Transverse colon (tissue), 4 donors: ENCODE measurements at regions of chr16 and their contacts with region 1.

Region 1: GRCh38 chr16:10181196-10182162 is 749 bp downstream of the GRIN2A start:
- DNase-seq: peak; percentile 60
- H3K4me3 ChIP-seq: peak overlapping the region in 2 of 4 donors; percentile 15 to 36
- H3K27ac ChIP-seq: no peak overlapping the region
- H3K4me1 ChIP-seq: peaks cover 5 to 23% (median 17%) of the 10 kb centered on the region in 4 donors
- H3K27me3 ChIP-seq: peaks cover 62% of the 10 kb centered on the region
- CTCF ChIP-seq: peak; percentile 74 to 88 (median 86)
- EP300 ChIP-seq: no peak
- POLR2A ChIP-seq: no peak

Region 2: DNA sequence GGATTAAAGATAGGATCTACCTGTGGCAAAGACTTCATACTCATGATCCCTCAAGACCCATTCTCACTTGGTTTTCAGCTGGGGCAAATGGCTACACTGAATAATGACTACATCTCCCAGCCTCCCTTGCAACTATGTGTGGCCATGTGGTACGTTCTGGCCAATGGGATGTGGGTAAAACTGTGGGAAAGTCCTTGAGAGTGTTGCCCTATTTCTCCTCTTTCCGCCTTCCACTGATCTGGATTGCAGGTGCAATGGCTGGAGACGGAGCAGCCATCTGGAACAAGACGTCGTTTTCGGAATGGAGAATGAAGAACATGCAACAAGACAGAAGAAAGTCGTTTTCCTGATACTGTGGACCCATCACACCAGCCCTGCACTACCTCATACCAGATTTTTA is 1041.5 kb before region 1 on chr16:
- in situ Hi-C with region 1: loop called in 1 of 4 experiments (anchors 10 kb)
- intact Hi-C with region 1: no loop called
- DNase-seq: no peak
- H3K4me3 ChIP-seq: no peak overlapping the region
- H3K27ac ChIP-seq: no peak overlapping the region
- H3K4me1 ChIP-seq: peaks cover 0 to 9% (median 6%) of the 10 kb centered on the region in 4 donors
- H3K27me3 ChIP-seq: no peaks in the 10 kb centered on the region
- CTCF ChIP-seq: no peak
- EP300 ChIP-seq: no peak
- POLR2A ChIP-seq: no peak

Region 3: DNA sequence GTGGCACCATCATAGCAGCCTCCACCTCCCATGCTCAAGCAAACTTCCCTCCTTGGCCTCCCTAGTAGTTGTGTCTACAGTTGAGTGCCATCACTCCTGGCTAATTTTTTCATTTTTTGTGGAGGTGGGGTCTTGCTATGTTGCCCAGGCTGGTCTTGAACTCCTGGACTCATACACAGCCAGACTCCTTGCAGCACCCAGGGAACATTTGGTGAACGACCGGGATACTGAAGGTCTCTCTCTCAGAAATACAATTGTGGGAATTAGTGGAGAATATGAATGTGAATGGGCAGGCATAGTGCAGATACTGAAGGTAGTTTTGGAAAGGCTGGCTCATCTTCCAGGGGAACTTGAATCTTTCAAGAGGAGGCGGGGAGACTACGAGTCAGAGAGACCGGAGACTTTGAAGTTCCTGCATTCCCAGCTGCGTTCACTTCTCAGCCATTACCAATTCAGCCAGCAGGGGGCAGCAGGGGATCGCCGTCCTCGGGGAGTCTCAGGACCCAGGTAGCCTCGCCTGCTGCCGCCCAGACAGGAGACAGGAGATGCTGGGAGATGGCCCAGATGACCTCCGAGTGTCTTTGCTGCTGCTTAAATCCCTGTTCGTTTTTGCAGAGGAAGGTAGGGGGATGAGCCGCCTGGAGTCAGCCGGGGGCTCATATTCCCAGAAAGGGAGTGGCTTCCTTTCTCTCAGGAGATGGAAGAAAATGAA is 1021.5 kb before region 1 on chr16:
- in situ Hi-C with region 1: loop called in 1 of 4 experiments (anchors 10 kb)
- intact Hi-C with region 1: no loop called
- DNase-seq: peak; percentile 63
- H3K4me3 ChIP-seq: no peak overlapping the region
- H3K27ac ChIP-seq: no peak overlapping the region
- H3K4me1 ChIP-seq: no peaks in the 10 kb centered on the region
- H3K27me3 ChIP-seq: peaks cover 4% of the 10 kb centered on the region
- CTCF ChIP-seq: peak; percentile 44 to 81 (median 78)
- EP300 ChIP-seq: no peak
- POLR2A ChIP-seq: no peak

Region 4: DNA sequence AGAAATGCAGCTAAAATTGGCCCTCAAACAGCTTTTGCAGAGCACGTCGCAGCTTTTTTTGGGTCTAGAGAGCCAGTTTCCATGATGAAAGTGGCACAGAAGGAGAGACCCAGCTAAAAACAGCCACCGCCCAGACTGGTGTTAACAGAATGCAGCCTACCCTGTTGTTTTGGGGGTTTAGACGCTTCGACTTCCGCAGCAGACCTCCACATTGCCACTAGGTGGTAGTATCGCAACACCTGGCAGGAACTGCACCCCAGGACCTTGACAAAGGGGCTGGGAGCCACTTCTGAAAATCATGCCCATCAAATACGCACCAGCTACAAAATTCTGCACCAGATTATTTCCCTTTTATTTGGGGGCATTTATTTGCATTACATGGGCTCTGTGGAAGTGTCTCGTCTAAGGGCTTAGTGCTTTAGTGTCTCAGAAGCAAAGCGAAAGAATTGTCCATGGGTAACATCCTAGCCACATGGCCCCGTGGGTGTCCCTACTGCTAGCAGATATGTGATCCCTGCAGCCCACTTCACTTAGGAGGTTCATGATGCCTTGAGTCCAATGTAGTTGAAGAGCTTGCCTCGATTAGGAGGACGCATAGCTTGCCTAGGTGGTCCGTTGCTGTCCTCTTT is 922.9 kb before region 1 on chr16:
- in situ Hi-C with region 1: loop called in 1 of 4 experiments (anchors 25 kb)
- intact Hi-C with region 1: no loop called
- DNase-seq: peak; percentile 18
- H3K4me3 ChIP-seq: no peak overlapping the region
- H3K27ac ChIP-seq: no peak overlapping the region
- H3K4me1 ChIP-seq: peaks cover 0 to 8% (median 0%) of the 10 kb centered on the region in 4 donors
- H3K27me3 ChIP-seq: no peaks in the 10 kb centered on the region
- CTCF ChIP-seq: peak; percentile 56 to 76 (median 73)
- EP300 ChIP-seq: no peak
- POLR2A ChIP-seq: no peak

Region 5: GRCh38 chr16:9297437-9298113 is 883.9 kb before region 1 on chr16:
- in situ Hi-C with region 1: no loop called
- intact Hi-C with region 1: loop called (anchors 5 kb)
- DNase-seq: no peak
- H3K4me3 ChIP-seq: no peak overlapping the region
- H3K27ac ChIP-seq: no peak overlapping the region
- H3K4me1 ChIP-seq: peaks cover 0 to 18% (median 6%) of the 10 kb centered on the region in 4 donors
- H3K27me3 ChIP-seq: no peaks in the 10 kb centered on the region
- CTCF ChIP-seq: peak; percentile 42 to 65 (median 49)
- EP300 ChIP-seq: no peak
- POLR2A ChIP-seq: no peak

Region 6: DNA sequence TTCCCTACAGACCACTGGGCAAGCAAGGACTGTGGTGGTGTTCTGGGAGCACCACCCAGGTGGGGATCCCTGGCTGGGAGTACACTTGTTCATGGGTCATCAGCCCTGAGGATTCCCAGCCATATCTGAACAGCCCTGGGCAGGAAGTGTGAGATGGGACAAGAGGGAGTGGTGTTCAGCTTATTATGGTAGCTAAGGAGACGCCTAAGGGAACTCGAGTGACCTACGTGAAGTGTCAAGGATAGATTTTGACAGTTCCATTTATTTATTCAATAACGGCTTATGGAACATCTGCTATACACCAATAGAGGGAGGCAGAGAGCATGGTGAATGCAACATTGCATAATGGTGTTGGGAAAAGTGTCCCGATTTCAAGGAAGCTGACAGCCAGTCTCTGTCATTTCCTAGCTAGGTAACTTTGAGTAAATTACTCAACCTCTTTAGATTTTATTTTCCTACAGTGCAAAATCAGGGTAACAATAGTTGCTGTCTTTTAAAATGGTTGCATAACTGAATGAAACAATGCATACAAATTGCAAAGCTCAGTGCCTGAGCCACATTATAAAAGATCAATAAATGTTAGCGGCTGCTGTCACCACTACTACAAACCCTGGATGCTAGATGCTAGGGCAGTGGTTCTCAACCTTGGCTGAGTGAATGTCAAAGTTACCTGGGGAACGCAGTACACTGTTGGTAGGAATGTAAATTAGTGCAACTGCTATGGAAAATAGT is 533.3 kb before region 1 on chr16:
- in situ Hi-C with region 1: loop called in 1 of 4 experiments (anchors 25 kb)
- intact Hi-C with region 1: no loop called
- DNase-seq: no peak
- H3K4me3 ChIP-seq: no peak overlapping the region
- H3K27ac ChIP-seq: no peak overlapping the region
- H3K4me1 ChIP-seq: no peaks in the 10 kb centered on the region
- H3K27me3 ChIP-seq: no peaks in the 10 kb centered on the region
- CTCF ChIP-seq: peak; percentile 56 to 73 (median 69)
- EP300 ChIP-seq: no peak
- POLR2A ChIP-seq: no peak

Region 7: GRCh38 chr16:9665851-9666271 is 515.6 kb before region 1 on chr16:
- in situ Hi-C with region 1: no loop called
- intact Hi-C with region 1: loop called (anchors 10 kb)
- DNase-seq: peak; percentile 61
- H3K4me3 ChIP-seq: no peak overlapping the region
- H3K27ac ChIP-seq: peak overlapping the region; percentile 63 to 76 (median 68)
- H3K4me1 ChIP-seq: peaks cover 0 to 28% (median 3%) of the 10 kb centered on the region in 4 donors
- H3K27me3 ChIP-seq: no peaks in the 10 kb centered on the region
- CTCF ChIP-seq: no peak
- EP300 ChIP-seq: no peak
- POLR2A ChIP-seq: no peak